H1 (cell line): ENCODE measurements at regions of chr11 and their contacts with region 1.

Region 1: GRCh38 chr11:9060700-9061111 is 30.7 kb downstream of the SCUBE2 start:
- DNase-seq: no peak
- H3K4me3 ChIP-seq: no peak overlapping the region
- H3K27ac ChIP-seq: no peak overlapping the region
- H3K4me1 ChIP-seq: no peaks in the 10 kb centered on the region
- H3K27me3 ChIP-seq: no peaks in the 10 kb centered on the region
- CTCF ChIP-seq: peak; percentile 47 to 71 (median 61)
- EP300 ChIP-seq: no peak
- POLR2A ChIP-seq: no peak
- RAD21 ChIP-seq: peak; percentile 54 to 69

Region 2: DNA sequence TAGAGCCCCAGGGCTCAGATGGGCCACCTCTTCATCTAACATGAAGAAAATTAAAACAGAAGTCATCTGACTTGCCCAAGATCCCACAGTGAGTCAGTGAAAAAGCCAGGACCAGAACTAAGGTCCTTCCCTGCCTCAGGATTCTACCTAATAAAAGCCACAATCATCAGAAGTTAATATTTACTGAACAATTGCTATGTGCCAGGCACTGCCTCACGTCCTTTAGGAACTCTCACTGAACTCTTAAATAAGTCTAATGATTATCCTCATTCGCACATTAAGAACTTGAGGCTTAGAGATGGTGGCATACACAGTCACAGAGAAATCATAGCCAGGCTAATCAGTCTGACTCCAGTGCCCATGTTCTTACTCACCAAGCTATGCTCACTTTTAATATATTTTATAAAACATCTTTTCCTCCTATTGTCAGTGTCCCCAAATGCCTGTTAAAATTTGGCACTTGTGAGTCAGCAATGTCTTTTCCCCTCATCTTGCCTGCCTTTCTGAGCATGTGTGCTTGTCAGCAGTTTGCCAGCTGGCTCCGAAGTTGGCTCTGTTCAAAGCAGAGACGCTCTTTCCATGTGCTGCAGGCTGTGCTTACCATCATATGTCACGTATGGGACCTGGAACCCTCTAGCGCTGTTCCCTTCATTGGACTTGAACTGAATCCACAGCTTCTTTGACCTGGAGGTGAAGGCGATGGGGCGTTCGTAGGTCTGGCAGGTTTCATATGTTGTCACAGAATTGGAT is 35.4 kb before region 1 on chr11:
- CTCF ChIA-PET with region 1: interaction called, 11 read pairs
- POLR2A ChIA-PET with region 1: no interaction called
- DNase-seq: no peak
- H3K4me3 ChIP-seq: no peak overlapping the region
- H3K27ac ChIP-seq: no peak overlapping the region
- H3K4me1 ChIP-seq: no peaks in the 10 kb centered on the region; a peak in 2 of 7 replicates
- H3K27me3 ChIP-seq: no peaks in the 10 kb centered on the region; a peak in 1 of 7 replicates
- CTCF ChIP-seq: no peak
- EP300 ChIP-seq: no peak
- POLR2A ChIP-seq: no peak
- RAD21 ChIP-seq: no peak

Region 3: GRCh38 chr11:9037046-9037780 is 23.5 kb before region 1 on chr11:
- CTCF ChIA-PET with region 1: interaction called, 22 read pairs
- POLR2A ChIA-PET with region 1: no interaction called
- DNase-seq: no peak
- H3K4me3 ChIP-seq: no peak overlapping the region
- H3K27ac ChIP-seq: 0 out of 2 replicates have a peak overlapping the region, but pooled peaks have one; percentile 7
- H3K4me1 ChIP-seq: peaks cover 0 to 8% (median 2%) of the 10 kb centered on the region in 4 experiments; a peak in 3 of 7 replicates
- H3K27me3 ChIP-seq: no peaks in the 10 kb centered on the region
- CTCF ChIP-seq: no peak
- EP300 ChIP-seq: no peak
- POLR2A ChIP-seq: no peak
- RAD21 ChIP-seq: no peak

Region 4: DNA sequence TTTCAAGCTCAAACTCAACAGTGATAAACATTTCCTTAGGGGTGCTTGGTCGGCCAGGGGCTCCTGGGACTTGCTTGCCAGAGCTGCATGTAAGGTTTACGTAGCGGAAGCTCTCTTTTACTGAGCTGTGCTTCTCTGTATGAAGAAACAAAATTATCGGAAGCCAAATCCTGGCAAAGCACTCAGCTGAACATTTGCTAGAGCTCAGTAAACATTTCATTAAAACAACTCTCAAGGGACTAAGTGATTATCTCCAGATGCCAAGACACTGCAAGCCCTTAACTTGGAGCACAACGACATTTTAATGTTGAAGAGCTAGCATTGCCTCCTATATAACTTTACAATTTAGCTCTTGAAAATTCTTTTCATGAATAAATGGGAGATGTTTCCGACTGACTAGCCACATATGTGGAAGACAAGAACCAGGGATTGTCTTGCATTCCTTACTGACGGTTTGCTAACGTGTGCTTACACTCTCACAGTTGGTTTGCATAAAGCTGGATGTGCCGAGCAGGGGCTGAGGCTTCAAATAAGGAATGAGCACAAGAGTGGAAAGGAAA is 12.7 kb before region 1 on chr11:
- CTCF ChIA-PET with region 1: interaction called, 53 read pairs
- POLR2A ChIA-PET with region 1: interaction called, 3 read pairs
- DNase-seq: no peak
- H3K4me3 ChIP-seq: no peak overlapping the region
- H3K27ac ChIP-seq: no peak overlapping the region
- H3K4me1 ChIP-seq: peaks cover 0 to 10% (median 2%) of the 10 kb centered on the region in 4 experiments; a peak in 5 of 7 replicates
- H3K27me3 ChIP-seq: no peaks in the 10 kb centered on the region
- CTCF ChIP-seq: no peak
- EP300 ChIP-seq: no peak
- POLR2A ChIP-seq: no peak
- RAD21 ChIP-seq: no peak

Region 5: GRCh38 chr11:9078113-9079086 is 17.7 kb after region 1 on chr11:
- CTCF ChIA-PET with region 1: interaction called, 137 read pairs
- POLR2A ChIA-PET with region 1: interaction called, 4 read pairs
- DNase-seq: peak in 1 of 2 experiments; percentile 46
- H3K4me3 ChIP-seq: no peak overlapping the region
- H3K27ac ChIP-seq: no peak overlapping the region
- H3K4me1 ChIP-seq: no peaks in the 10 kb centered on the region; a peak in 1 of 7 replicates
- H3K27me3 ChIP-seq: no peaks in the 10 kb centered on the region
- CTCF ChIP-seq: peak; percentile 46 to 62 (median 54)
- EP300 ChIP-seq: no peak
- POLR2A ChIP-seq: no peak
- RAD21 ChIP-seq: peak; percentile 26 to 52; a peak in 3 of 4 replicates